ENCODE measurements at regions of chr20 and their contacts with region 1.

Region 1: DNA sequence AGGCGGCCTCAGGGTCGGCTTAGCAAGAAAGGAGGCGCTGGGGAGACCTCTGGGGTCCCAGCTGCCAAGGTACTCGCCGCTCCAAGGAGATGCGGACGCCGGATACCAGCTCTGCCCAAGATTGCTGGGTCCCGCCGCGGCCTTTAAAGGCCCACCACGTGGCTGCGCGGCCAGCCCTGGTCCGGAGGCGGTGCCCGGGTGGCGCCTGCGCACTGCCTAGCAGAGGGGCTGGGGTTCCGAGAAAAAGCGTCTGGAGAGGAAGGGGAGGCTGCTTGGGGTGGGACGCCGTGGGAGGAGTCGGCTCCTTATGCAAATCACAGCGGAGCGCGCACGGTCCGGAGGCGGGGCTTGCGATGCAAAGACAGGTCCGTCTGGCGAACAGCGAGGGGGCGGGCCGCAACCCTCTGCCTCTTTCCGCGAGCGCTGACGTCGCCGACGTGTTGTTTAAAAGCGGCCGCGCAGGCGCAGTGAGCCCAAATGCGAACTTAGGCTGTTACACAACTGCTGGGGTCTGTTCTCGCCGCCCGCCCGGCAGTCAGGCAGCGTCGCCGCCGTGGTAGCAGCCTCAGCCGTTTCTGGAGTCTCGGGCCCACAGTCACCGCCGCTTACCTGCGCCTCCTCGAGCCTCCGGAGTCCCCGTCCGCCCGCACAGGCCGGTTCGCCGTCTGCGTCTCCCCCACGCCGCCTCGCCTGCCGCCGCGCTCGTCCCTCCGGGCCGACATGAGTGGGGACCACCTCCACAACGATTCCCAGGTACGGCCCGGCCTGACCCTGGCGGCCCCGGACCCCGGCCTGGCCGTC is at the start of gene TOP1:
- DNase-seq: peak; percentile 100
- ATAC-seq: peak; percentile 97
- H3K4me3 Mint-ChIP-seq: peak within 1 kb of the TSS; percentile 85
- H3K27ac Mint-ChIP-seq: peak within 1 kb of the TSS; percentile 93
- H3K4me1 Mint-ChIP-seq: peaks cover 46% of the 10 kb centered on the region
- H3K27me3 Mint-ChIP-seq: peaks cover 2% of the 10 kb centered on the region
- total RNA-seq, gene TOP1: 73.1 to 89.0 TPM

Region 2: GRCh38 chr20:41038878-41039404 is 10.4 kb after region 1 on chr20:
- CTCF ChIA-PET with region 1: interaction called, 19 read pairs
- DNase-seq: no peak
- ATAC-seq: no peak
- H3K4me3 Mint-ChIP-seq: no peak overlapping the region
- H3K27ac Mint-ChIP-seq: peak overlapping the region; percentile 28
- H3K4me1 Mint-ChIP-seq: peaks cover 87% of the 10 kb centered on the region
- H3K27me3 Mint-ChIP-seq: no peaks in the 10 kb centered on the region